Psoas muscle (tissue), 8 donors: ENCODE measurements at regions of chr17 and their contacts with region 1.

Region 1: GRCh38 chr17:38485146-38485468 is 56.8 kb downstream of the ARHGAP23 start:
- DNase-seq: no peak
- ATAC-seq: no peak
- H3K4me3 ChIP-seq: no peak overlapping the region
- H3K27ac ChIP-seq: no peak overlapping the region
- H3K4me1 ChIP-seq: peaks cover 4% of the 10 kb centered on the region
- H3K27me3 ChIP-seq: peaks cover 0 to 1% (median 0%) of the 10 kb centered on the region in 3 donors
- CTCF ChIP-seq: no peak

Region 2: DNA sequence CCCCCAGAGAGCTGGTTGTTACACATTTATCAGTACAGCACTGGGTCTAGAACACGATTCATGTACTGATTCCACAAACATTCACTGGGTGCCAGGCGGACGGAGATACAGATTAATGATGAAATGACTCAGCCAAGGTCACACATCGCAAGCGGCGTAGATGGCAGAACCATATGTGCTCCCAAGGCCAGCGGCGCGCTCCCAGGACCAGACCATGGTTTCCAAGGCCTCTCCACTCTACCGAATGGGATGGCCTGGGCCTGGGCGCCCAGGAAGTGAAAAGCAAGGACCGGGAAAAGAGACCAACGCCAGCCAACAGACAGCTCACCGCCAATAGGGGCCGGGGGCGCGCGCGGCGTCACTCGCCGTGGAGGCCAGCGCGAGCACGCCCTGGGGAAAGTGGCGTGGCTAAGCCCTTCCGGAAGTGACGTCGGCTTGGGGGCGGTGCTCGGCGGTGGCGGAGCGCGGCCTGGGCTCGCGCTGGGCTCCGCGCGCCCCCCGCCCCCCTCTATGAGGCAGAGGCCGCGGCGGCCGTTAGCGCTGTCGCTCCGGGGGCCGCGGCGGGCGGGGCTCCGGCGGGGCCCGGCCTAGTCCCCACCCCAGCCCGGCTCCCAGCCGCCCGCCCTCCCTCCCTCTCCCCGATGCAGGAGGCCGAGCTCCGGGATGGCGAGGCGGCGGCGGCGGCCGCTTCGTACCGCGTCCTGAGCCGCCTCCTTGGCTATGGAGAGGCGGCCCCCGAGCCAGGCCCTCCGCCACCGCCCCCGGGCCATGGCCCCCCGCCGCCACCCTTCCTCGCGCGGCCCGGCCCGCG is 133.5 kb before region 1 on chr17 and contains the start of gene SOCS7:
- intact Hi-C with region 1: loop called (anchors 5 to 10 kb)
- DNase-seq: peak; percentile 96 to 97
- ATAC-seq: peak; percentile 96 to 97 (median 96)
- H3K4me3 ChIP-seq: peak within 1 kb of the TSS; percentile 92
- H3K27ac ChIP-seq: peak within 1 kb of the TSS; percentile 84
- H3K4me1 ChIP-seq: peaks cover 33% of the 10 kb centered on the region
- H3K27me3 ChIP-seq: no peaks in the 10 kb centered on the region
- CTCF ChIP-seq: no peak
- total RNA-seq, gene SOCS7: 21.1 to 26.5 (median 24.5) TPM

Region 3: DNA sequence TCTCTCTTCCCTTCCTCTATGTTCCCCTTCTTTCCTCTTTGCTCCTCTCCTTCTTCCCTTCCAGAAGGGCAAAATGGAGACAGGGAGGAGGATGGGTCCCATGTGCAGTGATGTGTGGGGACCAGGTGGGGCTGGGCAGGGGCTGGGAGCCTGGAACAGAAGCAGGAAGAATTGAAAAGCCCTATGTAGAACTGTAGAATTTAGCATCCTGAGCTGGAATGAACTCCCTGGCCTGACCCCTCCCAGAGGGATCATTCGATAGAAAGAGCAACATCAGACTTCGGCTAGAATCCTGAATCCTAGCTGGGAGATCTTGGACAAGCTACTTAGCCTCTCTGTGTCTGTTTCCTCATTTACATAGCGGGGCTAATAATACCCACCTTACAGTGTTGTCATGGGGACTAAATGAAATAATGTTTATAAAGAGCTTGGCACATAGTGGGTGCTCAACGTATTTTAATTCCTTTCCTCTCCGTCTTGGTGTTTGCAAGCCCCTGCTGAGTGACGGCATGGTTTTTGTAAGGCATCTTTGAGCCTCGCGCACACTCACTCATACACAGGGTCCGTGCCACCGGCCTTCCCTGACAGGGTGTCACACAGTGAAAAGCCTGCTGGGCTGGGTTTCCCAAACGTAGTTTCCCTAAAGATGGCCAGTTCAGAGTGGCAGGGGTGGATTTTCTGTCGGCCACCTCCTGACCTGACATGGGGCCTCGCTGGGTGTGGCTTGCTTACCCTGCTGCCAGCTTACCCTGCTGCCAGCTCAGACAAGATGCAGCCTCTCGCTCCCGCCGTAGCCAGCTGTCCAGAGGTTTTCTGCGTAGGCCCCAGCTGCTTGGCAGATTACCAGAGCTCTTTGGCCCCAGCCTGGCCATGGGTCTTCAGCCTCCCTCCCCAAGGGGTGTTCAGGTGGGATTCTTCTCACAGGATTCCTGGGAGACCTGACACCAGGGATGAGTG is 63.0 kb before region 1 on chr17:
- intact Hi-C with region 1: loop called (anchors 2 to 10 kb)
- DNase-seq: no peak
- ATAC-seq: no peak
- H3K4me3 ChIP-seq: no peak overlapping the region
- H3K27ac ChIP-seq: no peak overlapping the region
- H3K4me1 ChIP-seq: peaks cover 31% of the 10 kb centered on the region
- H3K27me3 ChIP-seq: peaks cover 0 to 24% (median 6%) of the 10 kb centered on the region in 3 donors
- CTCF ChIP-seq: no peak

Region 4: DNA sequence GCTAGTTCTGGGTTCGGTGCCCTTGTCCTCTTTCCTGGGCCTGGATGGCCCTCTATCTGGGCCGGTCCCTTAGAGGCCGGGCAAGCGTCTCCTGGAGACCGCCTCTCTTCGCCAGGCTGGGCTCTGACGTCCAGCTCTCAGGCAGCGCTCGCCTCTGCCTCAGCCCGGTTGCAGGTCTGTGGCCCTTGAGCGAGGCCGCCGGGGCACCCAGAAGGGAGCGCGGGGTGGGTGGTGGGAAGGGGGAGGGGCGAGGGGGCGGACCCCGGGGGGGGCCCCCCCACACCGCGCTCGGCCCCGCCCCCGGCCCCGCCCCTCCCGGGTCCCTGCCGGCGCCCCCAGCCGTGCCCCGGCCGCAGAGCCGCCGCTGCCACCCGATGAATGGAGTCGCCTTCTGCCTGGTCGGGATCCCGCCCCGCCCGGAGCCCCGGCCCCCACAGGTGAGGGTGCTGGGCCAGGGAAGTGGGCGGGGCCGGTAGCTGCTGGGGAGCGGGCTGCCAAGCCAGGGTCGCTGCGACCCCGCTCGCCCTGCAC is 56.9 kb before region 1 on chr17 and contains the start of gene ARHGAP23:
- intact Hi-C with region 1: loop called (anchors 2 to 10 kb)
- DNase-seq: peak; percentile 71 to 86
- ATAC-seq: peak; percentile 65 to 69 (median 69)
- H3K4me3 ChIP-seq: peak within 1 kb of the TSS; percentile 95
- H3K27ac ChIP-seq: peak within 1 kb of the TSS; percentile 91
- H3K4me1 ChIP-seq: peaks cover 37% of the 10 kb centered on the region
- H3K27me3 ChIP-seq: no peaks in the 10 kb centered on the region
- CTCF ChIP-seq: no peak
- total RNA-seq, gene ARHGAP23: 23.6 to 35.8 (median 23.7) TPM

Region 5: GRCh38 chr17:38444151-38444550 is 41.0 kb before region 1 on chr17:
- intact Hi-C with region 1: loop called (anchors 2 kb)
- DNase-seq: peak; percentile 77 to 88
- ATAC-seq: peak; percentile 73 to 87 (median 81)
- H3K4me3 ChIP-seq: no peak overlapping the region
- H3K27ac ChIP-seq: no peak overlapping the region
- H3K4me1 ChIP-seq: peaks cover 43% of the 10 kb centered on the region
- H3K27me3 ChIP-seq: no peaks in the 10 kb centered on the region
- CTCF ChIP-seq: peak; percentile 88

Region 6: GRCh38 chr17:38654411-38655398 is 169.6 kb after region 1 on chr17:
- intact Hi-C with region 1: no loop called
- DNase-seq: no peak
- ATAC-seq: no peak
- H3K4me3 ChIP-seq: no peak overlapping the region
- H3K27ac ChIP-seq: no peak overlapping the region
- H3K4me1 ChIP-seq: no peaks in the 10 kb centered on the region
- H3K27me3 ChIP-seq: peaks cover 0 to 28% (median 7%) of the 10 kb centered on the region in 3 donors
- CTCF ChIP-seq: no peak